Calu3 (cell line): ENCODE measurements at regions of chr12 and their contacts with region 1.

Region 1: DNA sequence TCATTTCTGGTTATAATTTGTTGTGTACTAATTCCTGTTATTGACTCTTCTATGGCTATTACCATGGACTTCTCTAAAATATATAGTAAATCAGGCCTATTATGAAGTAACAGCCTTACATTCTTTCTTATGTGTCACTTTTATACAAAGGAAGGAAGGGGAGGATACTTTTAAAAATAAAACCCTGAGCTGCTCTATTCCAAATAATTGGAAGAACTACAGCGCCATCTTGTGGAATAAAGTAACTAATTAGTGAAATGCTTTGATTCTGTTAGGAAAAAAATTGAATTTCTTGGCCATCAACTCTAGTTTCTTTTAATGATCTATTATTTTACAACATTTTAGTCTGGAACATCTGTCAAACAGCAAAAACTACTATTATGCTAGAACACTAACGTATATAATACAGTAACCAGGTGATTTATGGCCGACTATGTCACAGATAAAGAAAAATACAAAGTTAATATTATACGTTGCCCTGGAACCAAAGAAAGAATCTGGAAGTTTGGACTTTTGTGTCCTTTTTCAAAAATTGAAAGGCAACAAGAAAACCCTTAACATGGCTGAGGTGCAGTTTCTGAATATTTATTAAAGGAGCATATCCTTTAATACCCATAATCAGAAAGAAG is 55.0 kb upstream of the NELL2 start:
- DNase-seq: no peak
- H3K4me3 Mint-ChIP-seq: no peak overlapping the region
- H3K27ac Mint-ChIP-seq: no peak overlapping the region
- H3K4me1 Mint-ChIP-seq: no peaks in the 10 kb centered on the region
- H3K27me3 Mint-ChIP-seq: no peaks in the 10 kb centered on the region
- CTCF ChIP-seq: peak; percentile 24

Region 2: DNA sequence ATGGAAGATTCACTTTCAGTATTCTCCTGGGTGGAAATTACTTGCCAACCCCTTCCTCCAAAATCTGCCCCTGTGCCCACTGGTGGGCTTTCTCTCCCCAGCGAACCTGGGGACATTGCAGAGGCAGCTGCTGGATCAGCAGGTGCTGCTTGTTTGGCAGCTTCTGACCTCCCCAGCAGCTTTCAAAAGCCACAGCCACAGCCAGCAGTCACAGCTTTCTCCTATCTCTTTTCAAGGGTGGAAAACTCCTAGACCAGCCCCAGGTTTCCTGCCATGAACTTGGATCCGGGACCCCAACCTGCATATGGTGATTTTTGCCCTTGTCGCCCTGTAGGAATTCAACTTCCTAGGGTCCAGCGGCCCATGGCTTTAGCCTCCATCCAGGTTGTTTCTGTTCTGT is 1709.9 kb before region 1 on chr12:
- CTCF ChIA-PET with region 1: no interaction called
- intact Hi-C with region 1: no loop called
- DNase-seq: no peak
- H3K4me3 Mint-ChIP-seq: no peak overlapping the region
- H3K27ac Mint-ChIP-seq: no peak overlapping the region
- H3K4me1 Mint-ChIP-seq: no peaks in the 10 kb centered on the region
- H3K27me3 Mint-ChIP-seq: no peaks in the 10 kb centered on the region
- CTCF ChIP-seq: no peak

Region 3: DNA sequence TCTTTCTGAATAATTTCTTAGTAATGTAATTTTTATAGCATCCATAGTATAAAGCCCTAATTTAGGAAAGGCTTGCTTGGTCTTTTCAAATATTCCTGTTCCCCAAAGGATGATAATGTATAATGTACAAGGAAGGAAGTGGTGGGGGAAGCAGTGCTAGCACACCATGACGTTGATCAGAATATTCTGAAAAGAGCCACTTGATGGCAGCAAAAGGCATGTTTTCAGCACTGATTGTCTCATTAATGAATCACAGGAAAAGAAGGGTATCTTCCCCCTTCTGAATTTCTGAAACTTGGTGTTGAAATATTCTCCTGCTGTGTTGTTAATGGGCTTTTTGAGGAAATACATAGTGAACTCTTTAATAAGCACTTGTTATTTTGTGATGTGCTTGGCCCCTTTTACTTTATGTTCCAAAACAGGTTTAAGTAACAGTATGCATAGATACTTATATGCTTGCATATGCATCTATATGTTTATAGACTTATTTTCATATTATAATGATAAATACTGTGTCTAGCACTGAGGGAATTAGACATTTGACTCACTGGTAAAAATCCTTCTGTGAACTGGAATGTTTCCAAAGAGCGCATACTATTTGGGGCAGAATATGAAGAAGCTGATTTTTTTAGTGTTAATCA is 973.2 kb before region 1 on chr12:
- CTCF ChIA-PET with region 1: no interaction called
- intact Hi-C with region 1: loop called (anchors 1 kb)
- DNase-seq: peak; percentile 25
- H3K4me3 Mint-ChIP-seq: no peak overlapping the region
- H3K27ac Mint-ChIP-seq: no peak overlapping the region
- H3K4me1 Mint-ChIP-seq: no peaks in the 10 kb centered on the region
- H3K27me3 Mint-ChIP-seq: no peaks in the 10 kb centered on the region
- CTCF ChIP-seq: peak; percentile 28

Region 4: GRCh38 chr12:44015335-44015941 is 915.6 kb before region 1 on chr12:
- CTCF ChIA-PET with region 1: interaction called, 4 read pairs
- intact Hi-C with region 1: loop called (anchors 5 kb)
- DNase-seq: peak; percentile 1
- H3K4me3 Mint-ChIP-seq: no peak overlapping the region
- H3K27ac Mint-ChIP-seq: no peak overlapping the region
- H3K4me1 Mint-ChIP-seq: no peaks in the 10 kb centered on the region
- H3K27me3 Mint-ChIP-seq: no peaks in the 10 kb centered on the region
- CTCF ChIP-seq: no peak

Region 5: GRCh38 chr12:44317651-44318126 is 613.4 kb before region 1 on chr12:
- CTCF ChIA-PET with region 1: interaction called, 4 read pairs
- intact Hi-C with region 1: loop called (anchors 10 kb)
- DNase-seq: peak; percentile 5
- H3K4me3 Mint-ChIP-seq: no peak overlapping the region
- H3K27ac Mint-ChIP-seq: no peak overlapping the region
- H3K4me1 Mint-ChIP-seq: no peaks in the 10 kb centered on the region
- H3K27me3 Mint-ChIP-seq: no peaks in the 10 kb centered on the region
- CTCF ChIP-seq: peak; percentile 41

Region 6: DNA sequence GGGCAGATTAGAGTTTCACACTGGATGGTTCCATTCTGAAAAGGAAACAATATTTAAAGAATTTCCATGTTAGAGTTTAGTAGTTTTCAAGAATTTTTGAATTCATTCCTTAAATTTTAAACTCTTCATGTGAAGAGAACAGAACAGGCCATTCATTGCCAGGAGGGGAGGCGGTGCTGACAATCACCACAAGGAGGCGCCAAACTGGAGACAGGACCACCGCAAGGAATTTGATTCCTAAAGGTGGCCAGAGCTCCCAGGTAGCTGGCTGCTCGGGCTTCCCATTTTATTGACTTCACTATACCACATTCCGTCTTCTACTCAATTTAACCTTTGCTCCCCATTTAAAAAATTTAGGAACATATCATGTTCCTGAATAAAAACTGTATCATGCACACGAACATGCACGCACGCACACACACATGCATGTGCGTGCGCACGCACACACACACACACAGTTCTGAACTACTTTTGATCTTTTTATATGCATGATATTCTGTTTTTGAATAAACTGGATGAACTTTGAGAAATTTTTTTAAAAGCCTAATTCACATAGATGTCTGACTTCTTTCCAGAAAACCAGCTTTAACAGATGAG is 156.2 kb before region 1 on chr12:
- CTCF ChIA-PET with region 1: interaction called, 9 read pairs
- intact Hi-C with region 1: loop called (anchors 2 kb)
- DNase-seq: peak; percentile 60
- H3K4me3 Mint-ChIP-seq: no peak overlapping the region
- H3K27ac Mint-ChIP-seq: no peak overlapping the region
- H3K4me1 Mint-ChIP-seq: no peaks in the 10 kb centered on the region
- H3K27me3 Mint-ChIP-seq: no peaks in the 10 kb centered on the region
- CTCF ChIP-seq: peak; percentile 74

Region 7: DNA sequence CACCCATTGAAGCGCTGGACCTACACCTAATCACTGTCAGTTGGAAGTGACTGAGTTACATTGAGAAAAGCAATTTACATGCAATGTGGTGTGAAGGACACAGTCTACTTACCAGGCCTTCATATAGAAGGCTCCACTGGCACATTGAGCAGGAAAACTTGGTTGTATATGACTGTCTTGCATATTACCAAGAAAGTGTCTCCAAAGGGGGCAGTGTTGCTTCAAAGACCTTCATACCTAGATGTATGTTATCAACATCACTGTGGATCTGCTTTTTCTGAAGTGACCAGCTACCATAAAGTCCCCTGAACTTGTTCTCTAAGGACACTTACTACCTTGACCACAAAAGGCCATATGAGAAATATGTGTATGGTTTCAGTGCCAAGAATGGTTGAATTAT is 119.0 kb before region 1 on chr12:
- CTCF ChIA-PET with region 1: no interaction called
- intact Hi-C with region 1: loop called (anchors 1 kb)
- DNase-seq: no peak
- H3K4me3 Mint-ChIP-seq: no peak overlapping the region
- H3K27ac Mint-ChIP-seq: no peak overlapping the region
- H3K4me1 Mint-ChIP-seq: peaks cover 3% of the 10 kb centered on the region
- H3K27me3 Mint-ChIP-seq: no peaks in the 10 kb centered on the region
- CTCF ChIP-seq: no peak